ENCODE measurements at regions of chr22 and their contacts with region 1.

Region 1: GRCh38 chr22:45413368-45414211 is at the starts of genes RIBC2 and SMC1B:
- DNase-seq: peak; percentile 95
- ATAC-seq: peak; percentile 88
- H3K4me3 Mint-ChIP-seq: peak within 1 kb of the TSS; percentile 92
- H3K27ac Mint-ChIP-seq: peak within 1 kb of the TSS; percentile 94
- H3K4me1 Mint-ChIP-seq: peaks cover 21% of the 10 kb centered on the region
- H3K27me3 Mint-ChIP-seq: no peaks in the 10 kb centered on the region
- total RNA-seq, gene RIBC2: 13.4 to 13.5 TPM
- total RNA-seq, gene SMC1B: 1.6 to 2.1 TPM

Region 2: GRCh38 chr22:45318168-45318557 is 95.4 kb before region 1 on chr22:
- CTCF ChIA-PET with region 1: no interaction called
- POLR2A ChIA-PET with region 1: interaction called, 18 read pairs
- DNase-seq: peak; percentile 92
- ATAC-seq: peak; percentile 85
- H3K4me3 Mint-ChIP-seq: peak overlapping the region; percentile 80
- H3K27ac Mint-ChIP-seq: peak overlapping the region; percentile 99
- H3K4me1 Mint-ChIP-seq: peaks cover 78% of the 10 kb centered on the region
- H3K27me3 Mint-ChIP-seq: no peaks in the 10 kb centered on the region

Measured in activated CD8-positive, alpha-beta T cell treated with anti-CD3 and anti-CD28 coated beads, Interleukin-2, amount 10 ng/mL, durations not matched to agents 7 days and 5 days (primary cell).